Activated T-helper 2 cell treated with anti-CD3 and anti-CD28 coated beads, Interferon-gamma antibody, Interleukin-2, Interleukin-4, amounts not matched to agents 10 μg/mL and 5 μg/mL and 100 μg/mL, durations not matched to agents 14 hours and 24 hours and 36 hours (primary cell): ENCODE measurements at regions of chr14 and their contacts with region 1.

Region 1: GRCh38 chr14:51846631-51847488 is 13.6 kb upstream of the GNG2 start:
- DNase-seq: peak; percentile 87
- H3K4me3 Mint-ChIP-seq: peak overlapping the region; percentile 78
- H3K27ac Mint-ChIP-seq: peak overlapping the region; percentile 94
- H3K4me1 Mint-ChIP-seq: peaks cover 56% of the 10 kb centered on the region
- H3K27me3 Mint-ChIP-seq: no peaks in the 10 kb centered on the region

Region 2: DNA sequence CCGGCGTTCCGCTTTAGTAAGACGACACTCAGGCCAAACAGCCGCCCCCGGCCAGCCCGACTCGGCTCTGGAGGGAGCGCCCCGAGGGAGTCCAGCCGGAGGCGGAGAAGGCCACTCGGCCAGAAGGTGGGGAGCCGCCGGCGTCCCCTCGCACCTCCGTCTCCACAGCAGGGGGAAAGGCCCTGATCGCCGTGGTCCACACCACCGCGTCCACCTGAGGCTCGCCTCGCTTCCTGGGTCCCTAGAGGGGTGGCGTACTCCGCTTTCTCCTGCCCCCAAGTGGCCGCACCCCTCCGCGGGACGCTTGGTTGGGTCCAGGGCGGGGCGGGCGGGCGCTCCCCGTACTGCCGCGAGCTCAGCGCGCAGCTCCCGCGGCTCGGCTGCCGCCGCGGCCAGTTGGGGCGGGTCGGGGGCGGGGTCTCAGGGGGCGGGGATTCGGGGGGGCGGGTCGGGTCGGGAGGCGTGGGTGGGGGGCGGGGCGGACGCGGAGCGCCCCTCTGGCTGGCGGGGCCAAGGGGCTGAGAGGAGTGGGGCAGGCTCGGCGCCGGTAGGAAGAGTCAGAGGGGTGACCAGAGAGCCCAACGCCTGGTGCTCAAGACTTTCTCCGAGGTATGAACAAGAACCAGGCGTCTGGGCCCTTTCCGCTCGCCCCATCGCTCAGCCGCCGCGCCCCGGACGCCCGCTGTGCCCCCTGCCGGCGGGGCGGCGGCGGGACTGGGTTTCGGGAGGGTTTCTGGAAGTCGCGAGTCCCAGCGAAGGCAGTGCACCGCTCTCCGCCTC is 195.3 kb before region 1 on chr14 and contains the start of gene FRMD6:
- intact Hi-C with region 1: loop called (anchors 5 kb)
- DNase-seq: peak; percentile 78
- H3K4me3 Mint-ChIP-seq: peak within 1 kb of the TSS; percentile 84
- H3K27ac Mint-ChIP-seq: peak within 1 kb of the TSS; percentile 69
- H3K4me1 Mint-ChIP-seq: peaks cover 23% of the 10 kb centered on the region
- H3K27me3 Mint-ChIP-seq: peaks cover 11% of the 10 kb centered on the region
- total RNA-seq, gene FRMD6: 11.6 and 17.8 TPM in 2 replicates

Region 3: GRCh38 chr14:51828017-51828797 is 18.7 kb before region 1 on chr14:
- intact Hi-C with region 1: loop called (anchors 1 kb)
- DNase-seq: peak; percentile 44
- H3K4me3 Mint-ChIP-seq: no peak overlapping the region
- H3K27ac Mint-ChIP-seq: no peak overlapping the region
- H3K4me1 Mint-ChIP-seq: peaks cover 4% of the 10 kb centered on the region
- H3K27me3 Mint-ChIP-seq: no peaks in the 10 kb centered on the region

Region 4: DNA sequence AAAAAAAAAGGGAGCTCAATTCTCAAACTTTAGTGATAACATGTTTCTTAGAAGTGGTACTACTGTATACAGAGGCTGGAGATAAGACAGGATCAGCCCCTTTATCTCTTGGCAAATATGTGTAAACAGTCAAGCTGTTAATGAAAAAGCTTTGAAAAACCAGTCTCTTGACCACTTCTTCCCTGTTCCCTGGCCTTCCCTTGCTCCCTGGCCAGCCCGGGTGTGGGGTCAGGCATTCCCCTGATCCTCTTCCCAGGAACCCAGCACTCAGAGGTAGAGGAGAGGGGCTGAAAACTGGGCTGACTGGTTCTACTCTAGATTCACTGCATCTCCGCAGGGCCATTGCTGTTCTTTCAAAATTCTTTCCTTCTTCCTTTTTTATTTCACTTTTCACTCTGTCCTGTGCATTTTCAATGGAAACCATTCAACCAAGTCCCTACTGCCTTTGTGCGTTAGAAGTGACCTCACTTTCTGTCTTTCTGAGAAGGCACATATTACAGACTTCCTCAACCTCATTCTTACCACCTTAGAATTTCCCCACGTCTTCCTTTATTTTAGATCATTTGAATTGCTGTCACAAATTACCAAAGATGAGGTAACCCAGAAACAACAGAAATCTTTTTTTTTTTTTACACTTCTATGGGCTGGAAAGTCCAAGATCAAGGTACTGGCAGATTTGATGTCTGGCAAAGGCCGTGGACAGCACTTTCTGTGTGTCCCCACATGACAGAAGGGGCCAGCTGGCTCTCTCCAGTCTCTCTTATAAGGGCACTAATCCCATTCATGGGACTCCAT is 19.3 kb after region 1 on chr14:
- intact Hi-C with region 1: loop called (anchors 1 kb)
- DNase-seq: no peak
- H3K4me3 Mint-ChIP-seq: no peak overlapping the region
- H3K27ac Mint-ChIP-seq: no peak overlapping the region
- H3K4me1 Mint-ChIP-seq: peaks cover 35% of the 10 kb centered on the region
- H3K27me3 Mint-ChIP-seq: no peaks in the 10 kb centered on the region

Region 5: DNA sequence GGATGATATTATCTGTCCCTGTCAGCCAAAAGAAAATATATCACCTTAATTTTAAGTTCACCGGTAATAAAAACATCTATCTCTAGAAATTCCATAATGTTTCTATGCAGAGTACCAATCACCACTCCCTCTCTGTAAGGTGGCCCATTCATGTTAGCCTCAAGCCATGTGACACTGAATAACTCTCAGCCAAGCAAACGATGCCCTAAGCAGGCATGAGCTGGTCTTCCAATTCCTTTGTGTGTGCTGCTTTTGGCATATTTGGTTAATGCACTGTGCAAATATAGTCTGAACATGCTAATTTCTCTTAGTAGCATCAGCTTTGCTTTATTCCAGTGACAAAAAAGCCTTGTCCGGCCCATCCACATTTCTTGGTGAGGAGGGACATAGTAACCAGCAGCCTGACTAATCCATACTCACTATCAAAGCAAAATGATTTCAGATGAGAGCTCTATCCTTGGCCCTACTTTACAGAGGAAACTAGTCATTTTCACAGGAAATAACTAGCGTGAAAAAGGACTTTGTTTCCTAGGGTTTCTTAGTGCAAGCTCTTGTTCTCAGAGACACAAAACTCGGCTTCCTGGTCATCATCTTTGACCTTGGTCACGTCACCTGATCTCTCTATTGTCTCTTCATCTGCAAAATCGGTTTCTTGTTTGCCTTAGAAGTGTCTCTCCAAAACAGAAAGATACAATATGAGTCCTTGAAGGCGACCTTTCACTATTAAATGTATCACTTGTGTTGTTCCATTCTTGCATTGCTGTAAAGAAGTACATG is 83.2 kb after region 1 on chr14:
- intact Hi-C with region 1: loop called (anchors 1 kb)
- DNase-seq: no peak
- H3K4me3 Mint-ChIP-seq: no peak overlapping the region
- H3K27ac Mint-ChIP-seq: peak overlapping the region; percentile 83
- H3K4me1 Mint-ChIP-seq: peaks cover 32% of the 10 kb centered on the region
- H3K27me3 Mint-ChIP-seq: no peaks in the 10 kb centered on the region

Region 6: DNA sequence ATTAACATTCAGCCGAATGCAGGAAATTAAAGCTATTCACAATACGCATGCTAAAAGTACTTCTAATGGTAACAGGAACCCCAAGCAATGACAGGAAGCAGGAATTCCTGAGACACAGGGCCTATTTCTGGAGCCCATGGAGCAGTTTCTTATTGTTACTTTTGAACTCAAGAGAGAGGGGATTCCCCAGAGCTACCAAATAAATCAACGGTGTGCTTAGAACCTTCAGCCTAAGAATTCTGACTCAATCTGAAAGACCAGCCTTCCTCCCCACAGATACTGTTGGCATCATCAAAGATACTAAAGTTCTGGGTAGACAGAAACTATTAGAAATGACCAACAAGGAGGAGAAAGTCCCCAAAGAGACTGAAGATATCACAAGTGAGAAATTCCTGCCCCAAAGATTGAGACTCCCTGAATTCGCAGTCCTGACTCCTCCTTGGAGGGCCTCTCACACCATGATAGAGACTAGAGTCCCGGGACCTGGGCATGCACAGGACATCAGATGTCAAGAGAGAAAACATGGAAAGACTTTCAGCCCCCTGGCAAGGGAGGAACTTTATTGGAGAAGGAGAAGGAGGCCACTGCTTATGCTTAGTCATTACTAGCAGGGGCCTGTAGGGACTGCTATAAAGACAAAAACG is 175.2 kb after region 1 on chr14:
- intact Hi-C with region 1: no loop called
- DNase-seq: no peak
- H3K4me3 Mint-ChIP-seq: no peak overlapping the region
- H3K27ac Mint-ChIP-seq: no peak overlapping the region
- H3K4me1 Mint-ChIP-seq: peaks cover 38% of the 10 kb centered on the region
- H3K27me3 Mint-ChIP-seq: no peaks in the 10 kb centered on the region

Region 7: DNA sequence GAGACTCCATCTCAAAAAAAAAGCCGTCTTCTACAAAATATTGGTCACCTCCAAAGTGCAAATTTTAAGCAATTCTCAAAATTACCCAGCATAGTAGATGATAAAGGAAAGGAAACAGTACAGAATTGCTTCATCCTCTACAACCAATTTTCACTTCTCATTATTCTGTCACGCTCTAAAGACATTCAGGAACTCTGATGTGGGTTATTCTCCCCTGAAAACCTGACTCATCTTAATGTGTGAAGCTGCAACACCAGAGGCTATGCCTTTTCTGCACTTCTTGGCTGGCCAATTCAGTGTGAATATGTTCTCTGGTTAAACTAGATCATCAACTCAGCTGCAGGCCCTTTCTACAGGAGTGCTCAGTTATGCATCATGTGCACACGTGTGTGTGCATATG is 478.3 kb after region 1 on chr14:
- intact Hi-C with region 1: loop called (anchors 5 kb)
- DNase-seq: no peak
- H3K4me3 Mint-ChIP-seq: peak overlapping the region; percentile 37
- H3K27ac Mint-ChIP-seq: peak overlapping the region; percentile 73
- H3K4me1 Mint-ChIP-seq: peaks cover 81% of the 10 kb centered on the region
- H3K27me3 Mint-ChIP-seq: no peaks in the 10 kb centered on the region